CD8-positive, alpha-beta T cell (primary cell): ENCODE measurements at regions of chr1 and their contacts with region 1.

Region 1: GRCh38 chr1:77430966-77431690 is 149.3 kb downstream of the AK5 start:
- DNase-seq: peak in 2 of 9 experiments; percentile 50 to 68
- ATAC-seq: peak; percentile 95
- H3K4me3 ChIP-seq: peak overlapping the region in 1 of 2 experiments; percentile 5
- H3K4me3 Mint-ChIP-seq: no peak overlapping the region
- H3K27ac ChIP-seq: peak overlapping the region; percentile 38 to 82
- H3K27ac Mint-ChIP-seq: no peak overlapping the region
- H3K4me1 ChIP-seq: peaks cover 58% of the 10 kb centered on the region
- H3K4me1 Mint-ChIP-seq: peaks cover 26% of the 10 kb centered on the region
- H3K27me3 ChIP-seq: no peaks in the 10 kb centered on the region
- H3K27me3 Mint-ChIP-seq: no peaks in the 10 kb centered on the region
- CTCF ChIP-seq: no peak

Region 2: DNA sequence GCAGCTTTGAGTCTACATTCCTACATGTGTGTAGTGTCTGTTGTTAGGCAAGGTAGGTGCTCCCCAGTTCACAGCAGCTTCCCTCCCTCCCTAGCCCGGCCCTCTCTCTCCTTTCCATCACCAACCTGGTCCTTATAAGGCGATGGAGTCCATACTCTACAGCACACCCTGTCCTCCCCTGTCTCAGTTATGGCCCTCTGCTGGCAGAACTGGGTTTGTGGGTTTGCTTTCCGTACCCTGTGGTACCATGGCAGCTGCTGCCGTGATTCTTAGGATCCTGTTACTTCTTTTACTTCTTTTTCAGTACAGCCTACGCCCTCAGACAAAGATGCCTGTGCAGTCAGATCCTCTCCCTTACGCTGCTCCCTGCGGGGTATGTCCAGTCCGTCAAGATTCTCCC is 117.6 kb before region 1 on chr1:
- CTCF ChIA-PET with region 1: no interaction called
- POLR2A ChIA-PET with region 1: no interaction called
- intact Hi-C with region 1: loop called in 1 of 2 experiments (anchors 5 kb)
- DNase-seq: peak in 6 of 9 experiments; percentile 25 to 66 (median 34)
- ATAC-seq: peak; percentile 51
- H3K4me3 ChIP-seq: no peak overlapping the region
- H3K4me3 Mint-ChIP-seq: no peak overlapping the region
- H3K27ac ChIP-seq: no peak overlapping the region
- H3K27ac Mint-ChIP-seq: peak overlapping the region; percentile 11
- H3K4me1 ChIP-seq: peaks cover 34% of the 10 kb centered on the region
- H3K4me1 Mint-ChIP-seq: peaks cover 34% of the 10 kb centered on the region
- H3K27me3 ChIP-seq: no peaks in the 10 kb centered on the region
- H3K27me3 Mint-ChIP-seq: no peaks in the 10 kb centered on the region
- CTCF ChIP-seq: no peak

Region 3: GRCh38 chr1:77399250-77400086 is 31.7 kb before region 1 on chr1:
- CTCF ChIA-PET with region 1: no interaction called
- POLR2A ChIA-PET with region 1: interaction called, 3 read pairs
- intact Hi-C with region 1: loop called in 1 of 2 experiments (anchors 5 kb)
- DNase-seq: no peak
- ATAC-seq: no peak
- H3K4me3 ChIP-seq: no peak overlapping the region
- H3K4me3 Mint-ChIP-seq: no peak overlapping the region
- H3K27ac ChIP-seq: no peak overlapping the region
- H3K27ac Mint-ChIP-seq: no peak overlapping the region
- H3K4me1 ChIP-seq: no peaks in the 10 kb centered on the region
- H3K4me1 Mint-ChIP-seq: peaks cover 6% of the 10 kb centered on the region
- H3K27me3 ChIP-seq: no peaks in the 10 kb centered on the region
- H3K27me3 Mint-ChIP-seq: no peaks in the 10 kb centered on the region
- CTCF ChIP-seq: no peak

Region 4: GRCh38 chr1:77416692-77417450 is 14.3 kb before region 1 on chr1:
- CTCF ChIA-PET with region 1: interaction called, 8 read pairs
- POLR2A ChIA-PET with region 1: interaction called, 12 read pairs
- intact Hi-C with region 1: no loop called
- DNase-seq: no peak
- ATAC-seq: no peak
- H3K4me3 ChIP-seq: no peak overlapping the region
- H3K4me3 Mint-ChIP-seq: no peak overlapping the region
- H3K27ac ChIP-seq: no peak overlapping the region
- H3K27ac Mint-ChIP-seq: no peak overlapping the region
- H3K4me1 ChIP-seq: peaks cover 28% of the 10 kb centered on the region
- H3K4me1 Mint-ChIP-seq: peaks cover 44% of the 10 kb centered on the region
- H3K27me3 ChIP-seq: no peaks in the 10 kb centered on the region
- H3K27me3 Mint-ChIP-seq: peaks cover 2% of the 10 kb centered on the region
- CTCF ChIP-seq: no peak